ENCODE measurements at regions of chr16 and their contacts with region 1.

Region 1: GRCh38 chr16:58336332-58337089 is 41.7 kb upstream of the PRSS54 start:
- DNase-seq: peak; percentile 91
- ATAC-seq: peak; percentile 85

Region 2: GRCh38 chr16:58487566-58488351 is 151.2 kb after region 1 on chr16:
- intact Hi-C with region 1: loop called (anchors 2 kb)
- DNase-seq: peak; percentile 88
- ATAC-seq: peak; percentile 91